ENCODE measurements at regions of chr10 and their contacts with region 1.

Region 1: GRCh38 chr10:125160856-125161706 is 718 bp upstream of the CTBP2 start:
- DNase-seq: peak; percentile 82 to 89 (median 84)
- ATAC-seq: peak; percentile 83
- H3K4me3 ChIP-seq: peak overlapping the region; percentile 74
- H3K27ac ChIP-seq: peak overlapping the region; percentile 83
- H3K4me1 ChIP-seq: peaks cover 0 to 25% of the 10 kb centered on the region in 2 experiments; a peak in 4 of 5 replicates
- H3K27me3 ChIP-seq: no peaks in the 10 kb centered on the region
- CTCF ChIP-seq: peak; percentile 54 to 77 (median 71); a peak in 5 of 6 replicates
- EP300 ChIP-seq: no peak
- POLR2A ChIP-seq: peak; percentile 38
- RAD21 ChIP-seq: peak; percentile 46 to 60

Region 2: GRCh38 chr10:124943301-124944092 is 217.6 kb before region 1 on chr10:
- CTCF ChIA-PET with region 1: no interaction called
- POLR2A ChIA-PET with region 1: no interaction called
- in situ Hi-C with region 1: loop called (anchors 25 kb)
- intact Hi-C with region 1: loop called (anchors 10 kb)
- DNase-seq: peak in 2 of 4 experiments; percentile 0
- ATAC-seq: no peak
- H3K4me3 ChIP-seq: no peak overlapping the region
- H3K27ac ChIP-seq: no peak overlapping the region
- H3K4me1 ChIP-seq: peaks cover 3 to 12% of the 10 kb centered on the region in 2 experiments; a peak in 3 of 5 replicates
- H3K27me3 ChIP-seq: no peaks in the 10 kb centered on the region
- CTCF ChIP-seq: no peak
- EP300 ChIP-seq: no peak
- POLR2A ChIP-seq: no peak
- RAD21 ChIP-seq: no peak

Region 3: DNA sequence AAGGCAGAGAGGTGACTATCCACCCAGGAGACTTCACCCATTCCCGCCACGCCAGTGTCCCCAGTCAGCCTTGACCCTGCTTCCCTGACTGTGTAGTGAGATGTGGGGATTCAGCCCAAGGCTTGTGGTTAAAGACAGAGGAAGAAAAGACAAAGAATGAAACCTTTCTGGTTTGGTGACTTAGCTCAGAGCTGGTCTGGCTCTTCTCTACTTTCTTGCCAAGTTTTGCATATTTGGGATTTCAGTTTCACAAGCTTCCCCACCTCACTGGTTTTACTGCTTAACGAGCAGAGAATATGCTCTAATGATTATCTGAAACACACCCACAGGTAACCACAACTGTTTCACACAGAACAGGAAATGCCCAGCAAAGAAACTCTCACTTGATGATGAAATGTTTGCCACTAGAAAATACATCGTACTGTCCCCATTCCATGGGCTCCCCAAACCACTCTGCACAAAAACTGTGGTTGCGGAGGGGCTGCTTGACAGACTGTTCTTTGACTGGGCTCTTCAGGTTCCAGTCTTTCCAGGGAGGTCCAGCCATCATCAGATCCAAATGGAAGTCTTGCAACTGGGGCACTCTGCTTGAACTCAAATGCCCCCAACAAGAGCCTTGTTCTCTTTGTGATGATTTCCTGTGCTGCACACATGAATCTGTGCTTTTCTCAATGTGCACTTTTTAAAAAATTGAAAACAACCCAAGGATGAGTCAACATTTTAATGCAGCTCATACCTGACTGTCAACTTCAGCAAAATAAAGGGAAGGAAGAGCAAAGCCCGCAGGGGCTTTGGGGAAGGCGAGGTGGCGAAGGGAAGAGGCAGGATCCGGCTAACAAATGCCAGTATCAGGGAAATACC is 96.2 kb before region 1 on chr10:
- CTCF ChIA-PET with region 1: no interaction called
- POLR2A ChIA-PET with region 1: no interaction called
- in situ Hi-C with region 1: no loop called
- intact Hi-C with region 1: loop called (anchors 5 kb)
- DNase-seq: no peak
- ATAC-seq: no peak
- H3K4me3 ChIP-seq: no peak overlapping the region
- H3K27ac ChIP-seq: no peak overlapping the region
- H3K4me1 ChIP-seq: peaks cover 0 to 9% of the 10 kb centered on the region in 2 experiments; a peak in 2 of 5 replicates
- H3K27me3 ChIP-seq: no peaks in the 10 kb centered on the region
- CTCF ChIP-seq: no peak
- EP300 ChIP-seq: no peak
- POLR2A ChIP-seq: no peak
- RAD21 ChIP-seq: no peak

Region 4: GRCh38 chr10:125113691-125114371 is 47.2 kb before region 1 on chr10:
- CTCF ChIA-PET with region 1: no interaction called
- POLR2A ChIA-PET with region 1: interaction called, 3 read pairs
- in situ Hi-C with region 1: no loop called
- intact Hi-C with region 1: loop called (anchors 5 kb)
- DNase-seq: peak in 3 of 4 experiments; percentile 18 to 72 (median 56)
- ATAC-seq: peak; percentile 87
- H3K4me3 ChIP-seq: no peak overlapping the region
- H3K27ac ChIP-seq: peak overlapping the region; percentile 83
- H3K4me1 ChIP-seq: peaks cover 32 to 36% of the 10 kb centered on the region in 2 experiments
- H3K27me3 ChIP-seq: no peaks in the 10 kb centered on the region
- CTCF ChIP-seq: no peak
- EP300 ChIP-seq: peak; percentile 41; the same call in 1 of the 2 replicates
- POLR2A ChIP-seq: no peak
- RAD21 ChIP-seq: no peak